ENCODE measurements at regions of chr1 and their contacts with region 1.

Region 1: GRCh38 chr1:119549719-119550132 is 42.7 kb downstream of the HSD3B1 start:
- DNase-seq: peak; percentile 73
- H3K4me3 ChIP-seq: no peak overlapping the region
- H3K27ac ChIP-seq: no peak overlapping the region
- H3K4me1 ChIP-seq: peaks cover 17% of the 10 kb centered on the region
- H3K27me3 ChIP-seq: no peaks in the 10 kb centered on the region
- CTCF ChIP-seq: peak; percentile 64 to 79

Region 2: GRCh38 chr1:119372490-119373086 is 177.1 kb before region 1 on chr1:
- CTCF ChIA-PET with region 1: no interaction called
- dilution Hi-C with region 1: no loop called
- in situ Hi-C with region 1: no loop called
- intact Hi-C with region 1: loop called (anchors 2 kb)
- DNase-seq: peak; percentile 57
- H3K4me3 ChIP-seq: no peak overlapping the region
- H3K27ac ChIP-seq: no peak overlapping the region
- H3K4me1 ChIP-seq: peaks cover 16% of the 10 kb centered on the region
- H3K27me3 ChIP-seq: no peaks in the 10 kb centered on the region
- CTCF ChIP-seq: peak; percentile 26 to 48

Region 3: DNA sequence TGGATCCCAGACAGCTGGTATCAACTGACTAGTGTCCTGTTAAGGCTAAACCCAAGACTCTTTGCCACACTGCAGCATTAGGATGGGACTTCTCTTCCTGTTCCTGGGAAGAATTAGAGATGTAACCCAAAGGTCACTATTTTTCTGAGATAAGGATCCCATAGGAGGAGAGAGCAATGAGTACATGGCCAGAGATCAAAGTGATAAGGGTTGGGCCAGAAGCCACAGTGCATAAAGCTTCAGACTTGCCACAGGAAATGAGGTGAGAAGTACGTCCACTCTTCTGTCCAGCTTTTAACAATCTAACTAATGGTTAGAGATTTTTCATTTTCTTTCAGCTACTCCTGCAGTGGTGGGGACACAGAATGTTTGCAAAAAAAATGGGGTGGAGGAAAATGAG is 42.8 kb before region 1 on chr1 and contains the start of gene HSD3B1:
- CTCF ChIA-PET with region 1: no interaction called
- dilution Hi-C with region 1: loop called (anchors 5 kb)
- in situ Hi-C with region 1: no loop called
- intact Hi-C with region 1: no loop called
- DNase-seq: no peak
- H3K4me3 ChIP-seq: no peak within 1 kb of the TSS
- H3K27ac ChIP-seq: no peak within 1 kb of the TSS
- H3K4me1 ChIP-seq: peaks cover 14% of the 10 kb centered on the region
- H3K27me3 ChIP-seq: no peaks in the 10 kb centered on the region
- CTCF ChIP-seq: no peak
- total RNA-seq, gene HSD3B1: 0.17 TPM in 1 of 2 donors, not detected in the other

Region 4: DNA sequence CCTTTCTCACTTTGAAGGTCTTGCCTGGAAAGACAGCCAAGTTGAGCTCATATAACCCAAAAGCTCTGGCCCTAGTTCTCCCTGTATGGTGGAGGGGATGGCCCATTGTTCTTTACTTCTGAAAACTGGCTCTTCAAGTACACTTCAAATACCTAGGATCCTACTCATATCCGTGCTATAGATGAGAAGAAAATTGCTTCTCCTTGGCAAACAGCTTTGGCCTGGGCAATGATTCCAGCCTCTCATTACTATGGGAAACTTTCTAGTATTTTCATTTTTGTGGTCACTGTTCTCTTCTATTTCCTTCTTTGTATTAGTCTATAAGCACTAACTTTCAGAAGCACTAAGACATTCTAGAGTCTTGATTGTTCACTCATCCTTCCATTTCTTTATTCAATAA is 44.6 kb after region 1 on chr1:
- CTCF ChIA-PET with region 1: no interaction called
- dilution Hi-C with region 1: no loop called
- in situ Hi-C with region 1: no loop called
- intact Hi-C with region 1: no loop called
- DNase-seq: peak; percentile 64
- H3K4me3 ChIP-seq: no peak overlapping the region
- H3K27ac ChIP-seq: peak overlapping the region; percentile 1
- H3K4me1 ChIP-seq: peaks cover 30% of the 10 kb centered on the region
- H3K27me3 ChIP-seq: no peaks in the 10 kb centered on the region
- CTCF ChIP-seq: no peak

Region 5: GRCh38 chr1:119647734-119648619 is 98.3 kb after region 1 on chr1 and contains the start of gene ZNF697:
- CTCF ChIA-PET with region 1: no interaction called
- dilution Hi-C with region 1: no loop called
- in situ Hi-C with region 1: no loop called
- intact Hi-C with region 1: no loop called
- DNase-seq: peak; percentile 97
- H3K4me3 ChIP-seq: peak within 1 kb of the TSS; percentile 64 to 83 (median 71)
- H3K27ac ChIP-seq: peak within 1 kb of the TSS; percentile 67
- H3K4me1 ChIP-seq: peaks cover 47% of the 10 kb centered on the region
- H3K27me3 ChIP-seq: no peaks in the 10 kb centered on the region
- CTCF ChIP-seq: peak; percentile 4 to 11
- total RNA-seq, gene ZNF697: 7.3 to 9.4 TPM